ENCODE measurements at regions of chr4 and their contacts with region 1.

Region 1: GRCh38 chr4:86934771-86935565 is at the start of gene AFF1:
- DNase-seq: peak; percentile 95
- ATAC-seq: peak; percentile 68
- H3K4me3 ChIP-seq: peak within 1 kb of the TSS; percentile 73 to 92 (median 83)
- H3K4me3 Mint-ChIP-seq: peak within 1 kb of the TSS; percentile 91
- H3K27ac ChIP-seq: peak within 1 kb of the TSS; percentile 79 to 86
- H3K27ac Mint-ChIP-seq: peak within 1 kb of the TSS; percentile 95
- H3K4me1 ChIP-seq: peaks cover 43 to 50% of the 10 kb centered on the region in 2 donors
- H3K4me1 Mint-ChIP-seq: peaks cover 44% of the 10 kb centered on the region
- H3K27me3 ChIP-seq: no peaks in the 10 kb centered on the region
- H3K27me3 Mint-ChIP-seq: no peaks in the 10 kb centered on the region
- CTCF ChIP-seq: no peak
- total RNA-seq, gene AFF1: 135 and 145 TPM in 2 replicates

Region 2: DNA sequence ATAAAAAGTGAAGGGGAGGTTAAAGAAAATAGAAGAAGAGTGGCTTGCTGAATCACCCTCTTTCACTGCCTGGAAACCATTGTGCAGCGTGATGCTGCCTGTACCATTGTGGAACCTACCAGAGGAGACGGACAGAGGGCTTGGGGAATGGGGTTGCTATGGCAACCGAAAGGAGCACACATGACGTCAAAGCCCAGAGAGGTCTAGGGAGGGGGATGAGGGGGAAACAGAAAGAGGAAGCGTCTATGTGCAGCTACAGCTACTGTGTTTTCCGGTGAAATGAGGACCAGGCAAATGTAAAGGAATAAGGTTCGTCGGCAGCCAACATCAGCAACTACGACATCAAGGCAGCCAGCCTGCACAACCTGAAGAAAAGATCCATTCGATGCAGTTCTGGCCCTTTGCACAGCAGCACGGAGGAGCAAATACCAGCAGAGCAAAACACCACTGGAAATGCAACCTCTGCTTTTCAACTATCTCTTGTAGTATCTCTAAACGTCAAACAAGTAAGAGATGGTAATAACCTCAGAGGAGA is 575.0 kb before region 1 on chr4 and contains the start of gene MAPK10:
- CTCF ChIA-PET with region 1: no interaction called
- POLR2A ChIA-PET with region 1: no interaction called
- intact Hi-C with region 1: loop called (anchors 2 kb)
- DNase-seq: peak; percentile 95
- ATAC-seq: peak; percentile 97
- H3K4me3 ChIP-seq: peak within 1 kb of the TSS; percentile 38 to 63 (median 56)
- H3K4me3 Mint-ChIP-seq: peak within 1 kb of the TSS; percentile 90
- H3K27ac ChIP-seq: peak within 1 kb of the TSS; percentile 50 to 74
- H3K27ac Mint-ChIP-seq: peak within 1 kb of the TSS; percentile 91
- H3K4me1 ChIP-seq: peaks cover 8 to 10% of the 10 kb centered on the region in 2 donors
- H3K4me1 Mint-ChIP-seq: peaks cover 19% of the 10 kb centered on the region
- H3K27me3 ChIP-seq: no peaks in the 10 kb centered on the region
- H3K27me3 Mint-ChIP-seq: no peaks in the 10 kb centered on the region
- CTCF ChIP-seq: no peak
- total RNA-seq, gene MAPK10: 3.1 and 3.7 TPM in 2 replicates

Region 3: DNA sequence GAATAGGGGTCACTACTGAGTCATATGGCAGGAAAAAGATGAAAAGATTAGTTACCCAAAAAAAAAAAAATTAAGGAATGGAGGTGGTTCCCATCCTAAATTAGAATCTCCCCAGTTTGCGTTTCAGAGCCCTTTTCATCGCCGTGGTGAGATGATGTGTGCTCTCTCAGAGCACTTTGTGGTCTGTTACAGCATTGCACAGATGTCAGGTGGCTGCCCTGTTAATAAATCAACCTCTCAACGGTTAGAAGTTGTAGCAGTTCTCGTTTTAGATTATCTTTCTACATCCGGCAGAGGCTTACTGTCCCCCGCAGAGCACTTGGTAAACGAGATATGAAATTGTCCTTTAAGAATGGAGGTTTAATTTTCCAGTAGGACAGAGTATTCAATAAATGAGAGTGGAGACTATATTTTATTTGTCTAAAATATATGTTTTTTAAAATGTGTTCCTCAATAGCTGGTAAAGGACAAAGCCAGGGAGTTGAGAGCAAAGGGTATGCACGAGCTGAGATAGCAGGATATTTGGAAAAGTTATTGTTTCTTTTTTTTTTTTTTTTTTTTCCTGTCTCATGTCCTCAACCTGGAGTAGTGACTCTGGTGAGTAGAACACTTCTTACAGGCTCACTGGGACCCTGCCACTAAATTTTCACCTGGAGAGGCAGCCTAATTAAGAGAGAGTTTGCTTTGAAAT is 26.8 kb after region 1 on chr4:
- CTCF ChIA-PET with region 1: interaction called, 6 read pairs
- POLR2A ChIA-PET with region 1: interaction called, 9 read pairs
- intact Hi-C with region 1: loop called (anchors 2 kb)
- DNase-seq: peak; percentile 72
- ATAC-seq: peak; percentile 89
- H3K4me3 ChIP-seq: peak overlapping the region in 2 of 5 experiments; percentile 5 to 20
- H3K4me3 Mint-ChIP-seq: peak overlapping the region; percentile 52
- H3K27ac ChIP-seq: peak overlapping the region; percentile 54 to 73
- H3K27ac Mint-ChIP-seq: peak overlapping the region; percentile 22
- H3K4me1 ChIP-seq: peaks cover 59 to 65% of the 10 kb centered on the region in 2 donors
- H3K4me1 Mint-ChIP-seq: peaks cover 48% of the 10 kb centered on the region
- H3K27me3 ChIP-seq: no peaks in the 10 kb centered on the region
- H3K27me3 Mint-ChIP-seq: no peaks in the 10 kb centered on the region
- CTCF ChIP-seq: no peak

Region 4: DNA sequence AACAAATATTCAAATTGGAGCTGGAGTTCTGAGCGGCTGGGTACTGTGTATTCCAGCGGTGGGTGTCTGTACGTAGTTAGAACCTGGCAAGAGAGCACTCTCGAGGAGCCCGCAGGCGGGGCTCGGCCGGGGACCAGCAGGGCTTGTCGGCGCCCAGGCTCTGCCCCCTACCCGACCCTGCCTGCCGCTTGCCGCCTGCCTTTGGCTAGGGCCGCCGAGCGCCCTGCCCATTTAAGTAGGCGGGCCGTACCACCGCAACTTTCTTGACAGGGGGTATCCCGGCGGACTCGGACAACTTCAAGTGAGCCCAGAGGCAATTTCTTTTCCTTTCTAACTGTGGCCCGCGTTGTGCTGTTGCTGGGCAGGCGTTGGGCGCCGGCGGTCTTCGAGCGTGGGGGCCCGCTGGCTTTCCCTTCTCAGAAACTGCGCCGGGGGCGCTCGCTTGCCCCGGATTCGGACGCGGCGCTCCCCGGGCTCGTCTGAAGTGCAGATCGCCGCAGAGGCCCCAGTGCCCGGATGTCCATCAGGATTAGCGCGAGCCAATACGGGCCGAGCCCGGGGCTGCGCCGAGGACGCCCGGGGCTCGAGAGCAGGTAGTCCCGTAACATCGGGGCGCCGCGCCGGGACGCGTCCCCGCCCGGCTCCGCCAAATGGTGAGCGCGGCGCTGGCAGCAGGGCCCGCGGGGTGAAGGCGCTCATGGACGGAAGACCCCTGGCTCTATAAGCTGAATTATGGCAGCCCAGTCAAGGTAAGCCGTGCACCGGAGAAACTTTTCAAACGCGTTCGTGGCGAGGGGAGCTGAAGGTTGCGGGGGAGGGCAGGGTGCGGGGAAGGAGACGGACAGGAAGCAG is 71.9 kb after region 1 on chr4:
- CTCF ChIA-PET with region 1: interaction called, 83 read pairs
- POLR2A ChIA-PET with region 1: interaction called, 51 read pairs
- intact Hi-C with region 1: loop called (anchors 1 kb)
- DNase-seq: peak; percentile 97
- ATAC-seq: peak; percentile 85
- H3K4me3 ChIP-seq: peak overlapping the region; percentile 67 to 100 (median 89)
- H3K4me3 Mint-ChIP-seq: peak overlapping the region; percentile 99
- H3K27ac ChIP-seq: peak overlapping the region; percentile 88 to 92
- H3K27ac Mint-ChIP-seq: peak overlapping the region; percentile 95
- H3K4me1 ChIP-seq: peaks cover 40 to 46% of the 10 kb centered on the region in 2 donors
- H3K4me1 Mint-ChIP-seq: peaks cover 54% of the 10 kb centered on the region
- H3K27me3 ChIP-seq: no peaks in the 10 kb centered on the region
- H3K27me3 Mint-ChIP-seq: no peaks in the 10 kb centered on the region
- CTCF ChIP-seq: peak; percentile 8

Region 5: DNA sequence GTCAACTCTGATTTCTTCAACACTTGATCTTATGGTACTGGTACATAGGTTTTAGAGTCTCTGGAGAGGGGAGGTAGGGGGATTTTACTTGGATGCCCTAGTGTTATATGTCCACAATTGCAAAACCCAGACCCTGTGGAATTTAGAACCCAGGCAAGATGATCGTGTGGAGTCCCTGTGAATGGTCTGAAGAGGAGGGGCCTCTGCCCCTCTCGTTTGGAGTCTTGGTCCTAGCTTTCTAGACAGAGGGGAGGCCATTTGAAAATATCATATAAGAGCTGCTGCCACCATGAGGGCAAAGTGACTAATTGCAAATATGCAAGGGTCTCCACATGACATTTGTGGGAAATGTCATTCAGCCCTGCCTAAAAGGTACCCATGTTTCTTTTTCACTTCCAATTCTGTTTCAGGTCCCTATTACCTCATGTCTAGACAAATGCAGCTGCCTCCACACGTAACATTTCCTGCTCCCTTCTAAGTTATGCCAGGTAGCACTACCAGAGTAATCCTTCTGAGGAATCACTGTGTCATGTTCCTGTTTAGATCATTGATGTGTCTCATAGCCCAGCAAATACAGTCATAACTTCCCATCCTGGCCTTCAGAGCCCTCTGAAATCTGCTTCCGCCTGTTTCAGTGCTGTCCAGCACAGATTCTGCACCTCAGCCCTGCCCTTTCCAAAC is 158.6 kb after region 1 on chr4:
- CTCF ChIA-PET with region 1: interaction called, 92 read pairs
- POLR2A ChIA-PET with region 1: interaction called, 4 read pairs
- intact Hi-C with region 1: loop called (anchors 1 kb)
- DNase-seq: peak; percentile 75
- ATAC-seq: peak; percentile 84
- H3K4me3 ChIP-seq: no peak overlapping the region
- H3K4me3 Mint-ChIP-seq: no peak overlapping the region
- H3K27ac ChIP-seq: peak overlapping the region in 1 of 2 donors; percentile 32
- H3K27ac Mint-ChIP-seq: peak overlapping the region; percentile 77
- H3K4me1 ChIP-seq: peaks cover 10 to 14% of the 10 kb centered on the region in 2 donors
- H3K4me1 Mint-ChIP-seq: peaks cover 21% of the 10 kb centered on the region
- H3K27me3 ChIP-seq: no peaks in the 10 kb centered on the region
- H3K27me3 Mint-ChIP-seq: no peaks in the 10 kb centered on the region
- CTCF ChIP-seq: peak; percentile 80

Region 6: GRCh38 chr4:88284439-88285234 is 1349.7 kb after region 1 on chr4 and contains the start of gene PPM1K:
- CTCF ChIA-PET with region 1: interaction called, 3 read pairs
- POLR2A ChIA-PET with region 1: no interaction called
- intact Hi-C with region 1: loop called (anchors 2 kb)
- DNase-seq: peak; percentile 99
- ATAC-seq: peak; percentile 83
- H3K4me3 ChIP-seq: peak within 1 kb of the TSS; percentile 67 to 99 (median 96)
- H3K4me3 Mint-ChIP-seq: peak within 1 kb of the TSS; percentile 95
- H3K27ac ChIP-seq: peak within 1 kb of the TSS; percentile 97 to 98
- H3K27ac Mint-ChIP-seq: peak within 1 kb of the TSS; percentile 96
- H3K4me1 ChIP-seq: peaks cover 40 to 49% of the 10 kb centered on the region in 2 donors
- H3K4me1 Mint-ChIP-seq: peaks cover 53% of the 10 kb centered on the region
- H3K27me3 ChIP-seq: no peaks in the 10 kb centered on the region
- H3K27me3 Mint-ChIP-seq: no peaks in the 10 kb centered on the region
- CTCF ChIP-seq: no peak
- total RNA-seq, gene PPM1K: 145 and 146 TPM in 2 replicates